Activated B cell treated with CpG ODN at 0.5 μM for 24 hours (primary cell): ENCODE measurements at regions of chr4 and their contacts with region 1.

Region 1: GRCh38 chr4:85986266-85986665 is 373.6 kb downstream of the MAPK10 start:
- DNase-seq: no peak
- ATAC-seq: no peak
- H3K4me3 Mint-ChIP-seq: no peak overlapping the region
- H3K27ac Mint-ChIP-seq: no peak overlapping the region
- H3K4me1 Mint-ChIP-seq: no peaks in the 10 kb centered on the region
- H3K27me3 Mint-ChIP-seq: no peaks in the 10 kb centered on the region
- CTCF ChIP-seq: no peak

Region 2: DNA sequence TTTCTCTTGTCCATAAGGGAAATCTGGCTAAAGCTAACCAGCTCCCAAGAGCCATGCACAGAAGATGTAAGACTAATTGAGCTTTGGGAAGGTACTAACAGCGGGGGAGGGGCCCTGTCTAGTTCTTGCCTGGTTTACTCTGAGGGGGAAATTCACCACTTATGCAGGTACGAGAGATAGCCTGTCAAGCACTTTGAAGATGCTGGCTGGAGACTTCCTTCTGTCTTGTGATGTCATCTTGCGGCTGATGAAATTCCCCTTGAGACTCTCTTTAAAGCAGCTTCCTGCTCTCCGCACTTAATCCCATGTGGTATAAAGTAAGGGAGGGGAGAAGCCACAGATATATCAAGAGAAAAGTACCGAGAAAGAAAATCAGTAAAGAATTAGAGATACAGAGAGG is 28.3 kb after region 1 on chr4:
- CTCF ChIA-PET with region 1: no interaction called
- POLR2A ChIA-PET with region 1: interaction called, 12 read pairs
- intact Hi-C with region 1: no loop called
- DNase-seq: no peak
- ATAC-seq: peak; percentile 92
- H3K4me3 Mint-ChIP-seq: peak overlapping the region; percentile 71
- H3K27ac Mint-ChIP-seq: peak overlapping the region; percentile 81
- H3K4me1 Mint-ChIP-seq: peaks cover 14% of the 10 kb centered on the region
- H3K27me3 Mint-ChIP-seq: no peaks in the 10 kb centered on the region
- CTCF ChIP-seq: no peak

Region 3: DNA sequence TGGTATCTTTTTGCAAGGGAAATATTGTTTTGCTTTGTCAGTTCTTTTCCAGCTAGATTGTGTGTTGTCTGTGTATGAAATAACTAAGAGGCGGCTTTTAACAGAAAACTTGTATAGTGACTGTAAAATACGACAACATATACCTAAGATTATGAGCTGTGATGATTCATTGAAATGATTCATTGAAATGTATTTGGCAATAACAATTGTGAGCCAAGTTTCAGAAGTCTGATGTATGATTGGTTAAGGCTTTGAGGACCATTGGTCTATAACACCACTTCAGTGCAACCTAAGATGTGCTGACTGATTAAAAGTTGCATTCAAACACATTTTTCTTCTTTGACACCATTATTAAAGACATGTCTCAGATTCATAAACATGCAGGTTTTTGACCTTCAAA is 684.5 kb after region 1 on chr4:
- CTCF ChIA-PET with region 1: no interaction called
- POLR2A ChIA-PET with region 1: no interaction called
- intact Hi-C with region 1: no loop called
- DNase-seq: no peak
- ATAC-seq: no peak
- H3K4me3 Mint-ChIP-seq: no peak overlapping the region
- H3K27ac Mint-ChIP-seq: no peak overlapping the region
- H3K4me1 Mint-ChIP-seq: no peaks in the 10 kb centered on the region
- H3K27me3 Mint-ChIP-seq: peaks cover 4% of the 10 kb centered on the region
- CTCF ChIP-seq: no peak